A549 (cell line): ENCODE measurements at regions of chr3 and their contacts with region 1.

Region 1: GRCh38 chr3:150216041-150216811 is 191.9 kb upstream of the TSC22D2 start:
- DNase-seq: no peak
- ATAC-seq: no peak
- H3K4me3 ChIP-seq: no peak overlapping the region
- H3K27ac ChIP-seq: no peak overlapping the region
- H3K4me1 ChIP-seq: no peaks in the 10 kb centered on the region
- CTCF ChIP-seq: no peak
- EP300 ChIP-seq: no peak
- POLR2A ChIP-seq: no peak
- RAD21 ChIP-seq: no peak

Region 2: GRCh38 chr3:149936812-149937233 is 279.4 kb before region 1 on chr3:
- CTCF ChIA-PET with region 1: interaction called, 11 read pairs
- POLR2A ChIA-PET with region 1: no interaction called
- DNase-seq: peak; percentile 33 to 56
- ATAC-seq: peak; percentile 90 to 94
- H3K4me3 ChIP-seq: no peak overlapping the region
- H3K27ac ChIP-seq: no peak overlapping the region
- H3K4me1 ChIP-seq: no peaks in the 10 kb centered on the region
- CTCF ChIP-seq: peak; percentile 80
- EP300 ChIP-seq: no peak
- POLR2A ChIP-seq: no peak
- RAD21 ChIP-seq: peak; percentile 80 to 90

Region 3: GRCh38 chr3:149969940-149970715 is 246.1 kb before region 1 on chr3:
- CTCF ChIA-PET with region 1: interaction called, 22 read pairs
- POLR2A ChIA-PET with region 1: interaction called, 5 read pairs
- DNase-seq: peak; percentile 29 to 88
- ATAC-seq: peak; percentile 60 to 73
- H3K4me3 ChIP-seq: peak overlapping the region; percentile 91
- H3K27ac ChIP-seq: peak overlapping the region; percentile 98 to 99
- H3K4me1 ChIP-seq: peaks cover 35% of the 10 kb centered on the region
- CTCF ChIP-seq: no peak
- EP300 ChIP-seq: no peak
- POLR2A ChIP-seq: no peak
- RAD21 ChIP-seq: no peak

Region 4: GRCh38 chr3:150202711-150203110 is 13.5 kb before region 1 on chr3:
- CTCF ChIA-PET with region 1: interaction called, 10 read pairs
- POLR2A ChIA-PET with region 1: no interaction called
- DNase-seq: no peak
- ATAC-seq: no peak
- H3K4me3 ChIP-seq: no peak overlapping the region
- H3K27ac ChIP-seq: no peak overlapping the region
- H3K4me1 ChIP-seq: no peaks in the 10 kb centered on the region
- CTCF ChIP-seq: no peak
- EP300 ChIP-seq: no peak
- POLR2A ChIP-seq: no peak
- RAD21 ChIP-seq: no peak

Region 5: GRCh38 chr3:150227839-150228238 is 11.6 kb after region 1 on chr3:
- CTCF ChIA-PET with region 1: interaction called, 23 read pairs
- POLR2A ChIA-PET with region 1: no interaction called
- DNase-seq: peak; percentile 38 to 47
- ATAC-seq: peak; percentile 74 to 88; a peak in 4 of 6 replicates
- H3K4me3 ChIP-seq: no peak overlapping the region
- H3K27ac ChIP-seq: no peak overlapping the region
- H3K4me1 ChIP-seq: no peaks in the 10 kb centered on the region
- CTCF ChIP-seq: peak; percentile 53
- EP300 ChIP-seq: no peak
- POLR2A ChIP-seq: no peak
- RAD21 ChIP-seq: peak; percentile 67 to 84

Region 6: DNA sequence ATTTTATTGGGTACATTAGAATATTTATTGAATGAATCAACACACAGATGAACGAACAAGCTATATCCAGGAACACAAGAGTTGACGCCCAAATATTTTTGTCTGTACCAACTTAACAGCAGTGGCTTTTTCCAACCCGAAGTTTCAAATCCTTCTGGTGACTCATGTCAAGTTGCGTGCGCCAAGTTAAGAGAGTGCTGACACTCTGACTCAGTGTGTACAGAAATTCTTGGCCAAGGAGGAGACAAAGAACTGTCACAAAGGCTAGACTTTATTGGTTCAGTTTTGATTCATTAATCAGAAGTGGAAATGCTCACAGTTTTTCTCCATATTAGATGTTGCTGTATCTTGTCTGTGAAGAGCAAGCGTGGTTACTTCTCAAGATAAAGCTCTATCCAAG is 132.3 kb after region 1 on chr3:
- CTCF ChIA-PET with region 1: no interaction called
- POLR2A ChIA-PET with region 1: no interaction called
- DNase-seq: peak; percentile 81 to 85
- ATAC-seq: peak; percentile 81 to 84
- H3K4me3 ChIP-seq: no peak overlapping the region
- H3K27ac ChIP-seq: peak overlapping the region; percentile 72 to 82
- H3K4me1 ChIP-seq: peaks cover 69% of the 10 kb centered on the region
- CTCF ChIP-seq: no peak
- EP300 ChIP-seq: peak; percentile 55 to 74; a peak in 2 of 5 replicates
- POLR2A ChIP-seq: no peak
- RAD21 ChIP-seq: peak in 1 of 2 experiments; percentile 35; a peak in 3 of 5 replicates